AG04449 (cell line): ENCODE measurements at regions of chr19 and their contacts with region 1.

Region 1: DNA sequence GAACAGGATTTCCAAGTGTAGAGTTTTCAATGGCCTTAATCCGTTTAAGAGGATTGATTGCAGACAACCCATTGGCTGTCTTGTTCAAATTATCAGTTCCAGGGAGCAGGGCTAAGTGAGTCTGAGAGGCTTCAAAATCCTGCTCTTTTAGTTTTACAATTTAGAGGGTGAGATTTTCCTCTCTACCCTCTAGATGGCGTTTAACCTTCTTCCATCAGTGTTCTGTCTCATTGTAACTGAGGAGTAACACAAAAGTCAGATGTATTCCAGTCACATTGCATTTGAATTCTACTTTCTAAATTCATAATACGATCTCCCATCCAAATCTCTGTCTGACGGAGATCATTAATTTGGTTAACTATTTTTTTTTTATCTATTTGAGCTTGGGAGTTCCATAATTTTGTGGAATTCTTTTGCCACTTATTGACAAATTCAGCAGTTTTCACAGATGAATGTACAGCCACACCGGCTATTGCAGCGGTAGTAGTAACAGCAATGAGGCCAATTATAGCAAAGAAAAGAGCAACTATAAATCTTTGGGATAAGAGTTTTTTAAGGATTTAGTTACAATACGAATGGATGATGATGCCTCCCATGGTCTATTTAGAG is 7.8 kb upstream of the C19orf84 start:
- DNase-seq: no peak
- H3K4me3 ChIP-seq: no peak overlapping the region
- CTCF ChIP-seq: peak; percentile 42

Region 2: DNA sequence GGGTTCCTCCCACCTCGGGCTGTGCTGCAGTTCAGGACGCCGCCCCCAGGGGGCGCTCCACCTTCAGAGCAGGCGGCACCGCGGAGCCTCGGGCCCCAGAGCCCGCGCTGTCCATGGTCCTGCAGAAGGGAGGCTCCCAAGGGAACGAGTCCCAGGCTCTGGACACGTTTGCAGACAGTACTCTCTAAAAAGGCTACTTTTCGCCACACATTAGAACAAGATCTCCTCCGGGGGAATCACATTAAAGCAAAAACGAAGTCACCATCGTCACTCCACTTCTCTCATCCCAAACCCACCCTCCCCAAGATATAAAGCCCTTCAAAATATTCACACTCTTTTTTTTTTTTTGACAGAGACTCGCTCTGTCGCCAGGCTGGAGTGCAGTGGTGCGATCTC is 23.9 kb after region 1 on chr19:
- CTCF ChIA-PET with region 1: interaction called, 26 read pairs
- POLR2A ChIA-PET with region 1: no interaction called
- DNase-seq: no peak
- H3K4me3 ChIP-seq: no peak overlapping the region
- CTCF ChIP-seq: peak; percentile 96